Activated B cell treated with CpG ODN at 0.5 μM for 24 hours (primary cell): ENCODE measurements at regions of chr18 and their contacts with region 1.

Region 1: GRCh38 chr18:77181953-77182707 is 49.5 kb upstream of the MBP start:
- DNase-seq: no peak
- ATAC-seq: no peak
- H3K4me3 Mint-ChIP-seq: no peak overlapping the region
- H3K27ac Mint-ChIP-seq: no peak overlapping the region
- H3K4me1 Mint-ChIP-seq: no peaks in the 10 kb centered on the region
- H3K27me3 Mint-ChIP-seq: peaks cover 2% of the 10 kb centered on the region
- CTCF ChIP-seq: no peak

Region 2: DNA sequence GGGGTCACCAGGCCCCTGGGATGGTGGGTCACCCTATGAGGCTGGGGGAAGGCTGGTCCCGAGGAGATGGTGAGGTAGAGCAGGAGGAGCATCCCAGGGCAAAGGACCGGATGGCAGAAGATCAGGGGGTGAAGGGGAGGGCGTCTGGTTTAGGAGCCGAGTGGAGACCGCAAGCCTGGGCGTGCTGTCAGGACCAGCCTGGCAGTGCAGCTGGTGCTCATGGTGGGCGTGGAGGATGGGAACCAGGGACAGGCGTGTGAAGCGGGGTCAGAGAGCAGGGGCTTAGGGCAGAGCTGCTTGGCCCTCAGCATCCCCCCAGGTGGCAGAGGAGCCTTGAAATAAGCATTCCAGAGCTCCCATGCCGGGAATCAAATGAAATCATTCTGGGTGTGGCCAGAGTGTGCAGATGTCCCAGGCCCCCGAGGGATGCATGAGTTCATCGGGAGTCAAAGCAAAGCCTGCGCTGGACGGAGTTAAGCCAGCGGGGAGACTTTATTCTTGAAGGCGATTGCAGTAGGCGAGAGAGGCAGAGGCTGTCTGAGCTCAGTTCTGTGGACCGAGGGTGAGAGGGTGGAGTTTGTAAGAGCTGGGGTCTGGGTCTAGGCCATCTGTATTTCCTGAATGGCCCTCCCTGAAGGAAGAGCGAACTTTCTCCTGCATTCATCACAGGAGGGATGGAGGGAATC is 16.5 kb before region 1 on chr18:
- CTCF ChIA-PET with region 1: no interaction called
- POLR2A ChIA-PET with region 1: no interaction called
- intact Hi-C with region 1: loop called (anchors 2 kb)
- DNase-seq: no peak
- ATAC-seq: no peak
- H3K4me3 Mint-ChIP-seq: no peak overlapping the region
- H3K27ac Mint-ChIP-seq: no peak overlapping the region
- H3K4me1 Mint-ChIP-seq: peaks cover 4% of the 10 kb centered on the region
- H3K27me3 Mint-ChIP-seq: peaks cover 11% of the 10 kb centered on the region
- CTCF ChIP-seq: no peak

Region 3: DNA sequence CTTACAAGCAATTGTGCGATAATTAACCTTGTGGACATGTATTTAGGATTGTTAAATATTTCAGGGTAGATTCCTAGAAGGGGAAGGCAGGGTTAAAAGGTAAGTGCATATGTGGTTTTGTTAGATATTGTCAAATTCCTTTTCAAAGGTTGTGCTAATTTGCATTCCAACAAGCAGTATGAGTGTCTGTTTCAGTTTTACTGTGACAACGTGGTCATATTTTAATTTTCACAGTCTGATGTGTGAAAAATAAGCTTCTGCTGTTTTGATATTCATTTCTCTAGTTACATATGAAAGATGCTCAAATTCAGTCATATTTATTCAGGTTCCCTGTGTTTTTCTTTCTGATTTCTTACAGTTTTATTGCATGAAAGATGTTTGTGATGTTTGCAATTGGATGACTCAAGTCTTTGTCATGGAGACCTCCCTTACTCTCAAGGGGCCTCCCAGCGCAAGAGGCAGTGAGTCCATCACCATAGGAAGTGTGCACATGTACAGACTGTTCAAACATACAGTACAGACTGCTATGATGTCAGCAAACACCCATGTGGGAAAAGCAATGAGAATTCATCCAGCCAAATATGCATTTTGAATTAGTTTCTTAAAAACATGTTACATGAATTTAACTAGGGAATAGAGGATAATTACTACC is 378.3 kb after region 1 on chr18:
- CTCF ChIA-PET with region 1: no interaction called
- POLR2A ChIA-PET with region 1: no interaction called
- intact Hi-C with region 1: no loop called
- DNase-seq: no peak
- ATAC-seq: no peak
- H3K4me3 Mint-ChIP-seq: no peak overlapping the region
- H3K27ac Mint-ChIP-seq: no peak overlapping the region
- H3K4me1 Mint-ChIP-seq: no peaks in the 10 kb centered on the region
- H3K27me3 Mint-ChIP-seq: no peaks in the 10 kb centered on the region
- CTCF ChIP-seq: no peak